Thyroid gland (tissue), 4 donors: ENCODE measurements at regions of chr4 and their contacts with region 1.

Region 1: DNA sequence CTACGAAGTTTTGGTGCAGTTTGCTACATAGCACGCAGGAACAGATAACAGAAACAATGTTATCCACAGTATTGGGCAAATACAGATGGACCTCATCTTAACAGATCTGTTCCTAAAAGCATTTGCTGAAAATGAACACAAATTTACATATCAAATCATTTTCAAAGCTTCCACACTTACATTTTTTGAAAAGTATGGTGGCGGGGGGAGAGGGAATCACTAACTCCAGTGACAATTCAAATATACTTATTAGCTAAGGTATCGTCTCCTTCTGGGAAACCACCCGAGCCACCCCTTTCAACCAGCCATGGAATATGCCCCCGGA is 175.0 kb downstream of the NSUN7 start:
- DNase-seq: no peak
- H3K4me3 ChIP-seq: no peak overlapping the region
- H3K27ac ChIP-seq: peak overlapping the region in 1 of 3 donors; percentile 43
- H3K4me1 ChIP-seq: peaks cover 11 to 20% of the 10 kb centered on the region in 2 donors
- H3K27me3 ChIP-seq: no peaks in the 10 kb centered on the region
- CTCF ChIP-seq: no peak
- POLR2A ChIP-seq: no peak

Region 2: GRCh38 chr4:40840985-40841571 is 83.7 kb before region 1 on chr4:
- intact Hi-C with region 1: no loop called
- DNase-seq: peak; percentile 79 to 80
- H3K4me3 ChIP-seq: no peak overlapping the region
- H3K27ac ChIP-seq: no peak overlapping the region
- H3K4me1 ChIP-seq: peaks cover 23 to 25% of the 10 kb centered on the region in 2 donors
- H3K27me3 ChIP-seq: no peaks in the 10 kb centered on the region
- CTCF ChIP-seq: peak; percentile 22 to 67 (median 50)
- POLR2A ChIP-seq: no peak

Region 3: DNA sequence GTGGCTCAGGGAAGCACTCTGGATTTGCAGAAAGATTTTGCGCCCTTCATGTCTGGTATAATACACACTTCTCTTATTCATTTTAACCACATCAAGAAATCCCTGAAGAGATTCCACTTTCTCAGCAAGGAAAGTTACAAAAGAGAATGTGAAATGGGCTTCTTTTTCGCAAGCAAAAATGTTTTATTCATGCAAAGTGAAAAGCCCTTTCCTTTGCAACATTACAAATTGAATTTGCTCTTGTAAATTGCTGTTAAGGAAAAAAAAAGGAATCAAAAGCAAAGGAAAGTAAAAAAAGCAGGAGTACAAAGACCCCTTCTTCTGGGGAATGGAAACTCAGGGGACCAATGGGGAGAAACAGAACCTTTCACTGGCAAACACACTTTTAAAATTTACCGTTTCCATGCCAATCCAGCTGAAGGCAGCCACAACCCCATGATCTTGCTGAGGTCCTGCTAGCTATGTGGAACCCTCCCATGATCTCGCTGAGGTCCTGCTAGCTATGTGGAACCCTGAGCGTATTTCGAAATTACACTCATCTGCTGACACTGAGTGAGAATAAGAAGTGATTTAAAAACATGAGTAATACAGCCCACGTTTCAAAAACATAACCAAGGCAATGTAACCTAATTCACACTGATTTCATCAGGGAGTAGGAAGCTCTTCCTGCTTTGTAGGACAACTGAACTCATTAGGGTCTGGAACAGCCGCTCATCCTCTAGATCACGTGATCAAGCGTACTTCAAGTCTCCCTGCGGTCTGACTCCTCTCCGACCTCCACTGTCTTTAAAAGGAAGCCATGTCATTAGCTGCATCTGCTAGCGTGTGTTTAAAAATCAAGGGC is 37.2 kb before region 1 on chr4:
- intact Hi-C with region 1: no loop called
- DNase-seq: no peak
- H3K4me3 ChIP-seq: no peak overlapping the region
- H3K27ac ChIP-seq: no peak overlapping the region
- H3K4me1 ChIP-seq: no peaks in the 10 kb centered on the region
- H3K27me3 ChIP-seq: no peaks in the 10 kb centered on the region
- CTCF ChIP-seq: no peak
- POLR2A ChIP-seq: no peak

Region 4: DNA sequence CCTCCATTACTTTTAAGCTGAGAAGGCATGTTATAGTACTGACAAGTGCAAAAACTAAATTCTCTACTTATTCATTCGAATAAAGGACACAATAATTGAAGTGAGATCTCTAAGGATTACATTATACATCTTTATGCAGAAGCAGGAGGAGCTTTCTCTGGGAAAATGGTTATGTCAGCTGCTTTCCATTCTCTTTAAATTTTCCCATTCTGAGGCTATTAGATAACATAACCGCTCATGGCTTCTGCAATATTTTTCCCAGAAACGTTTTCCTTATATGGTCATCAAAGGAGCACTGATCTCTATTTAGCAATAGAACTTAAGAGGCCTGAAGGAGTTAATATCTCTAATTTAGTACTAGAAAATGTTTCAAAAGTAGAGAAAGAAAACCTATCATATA is 46.6 kb after region 1 on chr4:
- intact Hi-C with region 1: loop called (anchors 5 kb)
- DNase-seq: no peak
- H3K4me3 ChIP-seq: no peak overlapping the region
- H3K27ac ChIP-seq: no peak overlapping the region
- H3K4me1 ChIP-seq: peaks cover 12 to 19% of the 10 kb centered on the region in 2 donors
- H3K27me3 ChIP-seq: no peaks in the 10 kb centered on the region
- CTCF ChIP-seq: no peak
- POLR2A ChIP-seq: no peak

Region 5: GRCh38 chr4:41009411-41009810 is 84.7 kb after region 1 on chr4:
- intact Hi-C with region 1: no loop called
- DNase-seq: no peak
- H3K4me3 ChIP-seq: no peak overlapping the region
- H3K27ac ChIP-seq: no peak overlapping the region
- H3K4me1 ChIP-seq: peaks cover 0 to 9% of the 10 kb centered on the region in 2 donors
- H3K27me3 ChIP-seq: no peaks in the 10 kb centered on the region
- CTCF ChIP-seq: no peak
- POLR2A ChIP-seq: no peak

Region 6: GRCh38 chr4:41214136-41214824 is 289.5 kb after region 1 on chr4 and contains the start of gene APBB2:
- intact Hi-C with region 1: loop called (anchors 5 kb)
- DNase-seq: peak; percentile 97 to 98
- H3K4me3 ChIP-seq: peak within 1 kb of the TSS; percentile 11 to 96 (median 85)
- H3K27ac ChIP-seq: peak within 1 kb of the TSS; percentile 78 to 89 (median 87)
- H3K4me1 ChIP-seq: peaks cover 24 to 45% of the 10 kb centered on the region in 2 donors
- H3K27me3 ChIP-seq: no peaks in the 10 kb centered on the region
- CTCF ChIP-seq: peak; percentile 53 to 95 (median 74)
- POLR2A ChIP-seq: peak; percentile 54 to 99
- total RNA-seq, gene APBB2: 174 to 253 (median 199) TPM